ENCODE measurements at regions of chr18 and their contacts with region 1.

Region 1: DNA sequence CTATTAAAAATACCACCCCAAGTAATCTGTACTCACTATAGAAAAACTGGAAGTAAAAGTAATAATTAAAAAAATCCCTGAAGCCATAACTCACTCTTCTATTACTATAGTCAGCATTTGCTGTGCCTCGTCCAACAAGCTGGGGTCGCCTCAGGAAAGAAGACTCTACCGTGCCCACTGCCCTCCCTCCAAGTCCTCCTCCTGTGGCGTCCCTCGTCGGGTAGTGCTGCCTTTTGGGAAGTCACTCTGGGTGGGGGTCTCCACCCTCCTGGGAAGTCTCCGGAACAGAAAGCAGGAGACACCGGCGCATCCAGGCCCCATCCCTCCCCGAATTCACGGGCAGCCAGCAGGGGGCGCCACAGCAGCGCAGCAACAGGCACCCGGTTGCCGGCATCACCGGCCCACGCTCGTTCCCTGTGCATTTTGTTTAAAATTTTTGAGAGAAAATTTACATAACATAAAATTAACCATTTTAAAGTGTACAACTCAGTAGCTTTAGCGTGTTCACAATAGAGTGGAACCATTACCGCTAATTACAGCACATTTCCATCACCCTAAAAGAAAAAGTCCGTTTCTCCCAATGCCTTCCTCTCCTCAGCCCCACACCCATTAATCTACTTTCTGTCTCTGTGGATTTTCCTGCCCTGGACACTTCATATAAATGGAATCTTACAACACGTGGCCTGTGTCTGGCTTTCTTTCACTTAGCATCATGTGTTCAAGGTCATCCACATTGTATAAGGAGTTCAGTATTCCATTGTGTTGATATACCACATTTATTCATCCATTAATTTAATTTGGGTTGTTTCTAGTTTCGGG is 62.2 kb downstream of the ADNP2 start:
- DNase-seq: peak; percentile 69
- ATAC-seq: no peak
- H3K4me3 Mint-ChIP-seq: no peak overlapping the region
- H3K27ac Mint-ChIP-seq: no peak overlapping the region
- H3K4me1 Mint-ChIP-seq: peaks cover 40% of the 10 kb centered on the region
- H3K27me3 Mint-ChIP-seq: peaks cover 67% of the 10 kb centered on the region

Region 2: DNA sequence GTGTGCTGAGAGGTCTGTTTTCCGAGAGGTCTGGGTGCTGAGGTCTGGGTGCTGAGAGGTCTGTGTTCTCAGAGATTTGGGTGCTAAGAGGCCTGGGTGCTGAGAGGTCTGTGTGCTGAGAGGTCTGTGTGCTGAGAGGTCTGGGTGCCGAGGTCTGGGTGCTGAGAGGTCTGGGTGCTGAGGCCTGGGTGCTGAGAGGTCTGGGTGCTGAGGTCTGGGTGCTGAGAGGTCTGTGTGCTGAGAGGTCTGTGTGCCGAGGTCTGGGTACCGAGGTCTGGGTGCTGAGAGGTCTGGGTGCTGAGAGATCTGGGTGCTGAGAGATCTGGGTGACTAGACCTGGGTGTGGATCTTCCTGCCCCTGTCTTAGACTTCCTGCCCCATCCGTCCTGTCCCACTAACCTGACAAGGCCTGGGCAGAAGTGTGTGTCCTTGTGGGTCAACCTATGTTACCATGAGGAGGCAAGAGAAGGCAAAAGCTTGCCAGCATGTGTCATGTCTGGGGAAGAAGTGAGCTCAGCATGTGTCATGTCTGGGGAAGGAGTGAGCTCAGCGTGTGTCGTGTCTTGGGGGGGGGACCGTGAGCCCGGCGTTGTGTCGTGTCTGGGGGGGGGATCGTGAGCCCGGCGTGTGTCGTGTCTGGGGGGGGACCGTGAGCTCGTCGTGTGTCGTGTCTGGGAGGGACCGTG is 304.2 kb before region 1 on chr18:
- CTCF ChIA-PET with region 1: no interaction called
- DNase-seq: no peak
- ATAC-seq: no peak
- H3K4me3 Mint-ChIP-seq: no peak overlapping the region
- H3K27ac Mint-ChIP-seq: no peak overlapping the region
- H3K4me1 Mint-ChIP-seq: no peaks in the 10 kb centered on the region
- H3K27me3 Mint-ChIP-seq: no peaks in the 10 kb centered on the region

Region 3: GRCh38 chr18:80200171-80200931 is 29.1 kb after region 1 on chr18:
- CTCF ChIA-PET with region 1: interaction called, 11 read pairs
- DNase-seq: no peak
- ATAC-seq: no peak
- H3K4me3 Mint-ChIP-seq: no peak overlapping the region
- H3K27ac Mint-ChIP-seq: no peak overlapping the region
- H3K4me1 Mint-ChIP-seq: peaks cover 36% of the 10 kb centered on the region
- H3K27me3 Mint-ChIP-seq: peaks cover 75% of the 10 kb centered on the region

Region 4: DNA sequence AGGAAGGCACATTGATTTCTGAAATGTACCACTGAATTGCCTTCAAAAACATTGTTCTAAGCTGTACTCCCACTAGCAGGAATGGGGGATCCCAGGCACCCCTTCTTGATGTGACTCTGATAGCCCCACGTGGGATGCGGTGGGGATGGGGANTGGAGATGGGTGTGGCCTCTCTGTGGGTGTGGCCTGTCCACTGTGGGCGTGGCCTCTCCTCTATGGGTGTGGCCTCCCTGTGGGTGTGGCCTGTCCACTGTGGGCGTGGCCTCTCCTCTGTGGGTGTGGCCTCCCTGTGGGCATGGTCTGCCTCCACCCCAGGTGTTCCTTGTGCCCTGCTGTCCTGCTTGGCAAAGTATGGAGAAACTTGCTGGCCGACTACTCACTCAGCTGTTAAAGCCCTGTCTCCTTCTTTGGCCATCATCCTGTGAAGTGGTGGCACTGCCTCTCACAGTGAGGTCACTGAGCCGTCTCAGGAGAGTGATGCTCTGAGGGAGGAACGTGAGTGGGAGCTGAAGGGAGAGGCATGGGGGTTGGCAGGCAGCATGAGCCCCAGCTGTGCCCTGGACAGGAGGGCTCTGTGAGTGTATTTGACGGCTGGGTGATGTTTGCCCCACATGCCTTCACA is 82.7 kb after region 1 on chr18:
- CTCF ChIA-PET with region 1: interaction called, 32 read pairs
- DNase-seq: no peak
- ATAC-seq: peak; percentile 67
- H3K4me3 Mint-ChIP-seq: no peak overlapping the region
- H3K27ac Mint-ChIP-seq: no peak overlapping the region
- H3K4me1 Mint-ChIP-seq: no peaks in the 10 kb centered on the region
- H3K27me3 Mint-ChIP-seq: peaks cover 45% of the 10 kb centered on the region

Measured in activated CD8-positive, alpha-beta memory T cell treated with anti-CD3 and anti-CD28 coated beads, Interleukin-2, amount 10 ng/mL, durations not matched to agents 7 days and 5 days (primary cell).